ENCODE measurements at regions of chr22 and their contacts with region 1.

Region 1: DNA sequence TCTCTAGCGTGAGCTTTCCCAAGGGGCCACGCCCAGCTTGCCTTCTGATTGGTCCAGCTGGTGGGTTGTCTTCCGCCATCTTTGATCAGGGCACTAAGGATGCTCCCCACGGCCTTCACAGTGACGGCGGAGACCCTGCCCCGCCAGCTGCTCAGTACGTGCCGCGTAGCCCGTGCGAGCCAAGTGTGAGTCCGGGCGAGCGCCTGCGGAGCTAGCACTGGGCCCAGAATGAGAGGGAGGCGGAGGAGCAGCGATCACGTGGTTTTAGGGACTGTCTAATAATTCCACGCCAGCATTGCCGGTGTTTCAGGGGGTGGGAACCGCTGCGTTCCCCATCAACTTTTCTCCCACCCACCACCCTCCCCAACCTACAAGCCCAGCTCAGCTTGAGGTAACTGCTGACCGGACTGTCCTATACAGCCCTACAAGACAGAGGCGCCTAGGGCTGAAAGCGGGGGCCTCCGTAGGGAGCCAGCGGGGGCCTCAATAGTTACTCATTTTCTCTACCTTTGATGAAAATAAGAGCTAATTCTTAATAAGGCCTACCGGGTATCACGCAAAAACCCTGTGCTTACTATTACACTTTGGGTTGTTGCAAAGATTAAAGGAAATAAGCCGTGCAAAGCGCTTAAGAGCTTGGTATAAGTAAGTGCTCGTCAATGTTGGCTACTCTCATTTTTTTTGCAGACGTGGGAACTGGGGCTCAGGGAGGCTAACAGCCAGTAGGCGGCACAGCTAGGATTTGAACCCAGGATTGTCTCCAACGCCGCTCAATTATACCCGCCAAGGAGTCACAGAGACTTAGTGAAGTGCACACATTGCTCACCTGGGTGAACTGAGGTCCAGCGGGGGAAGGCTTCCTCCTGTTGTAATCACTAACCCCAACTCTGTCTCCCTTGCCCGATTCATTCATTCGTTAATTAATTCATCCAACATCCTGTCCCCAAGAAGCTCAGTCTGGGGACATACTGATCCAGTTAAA is 1.3 kb upstream of the MTFP1 start:
- DNase-seq: peak; percentile 99 to 100
- H3K4me3 ChIP-seq: peak overlapping the region; percentile 36
- CTCF ChIP-seq: no peak
- POLR2A ChIP-seq: no peak

Region 2: GRCh38 chr22:31313366-31314147 is 889.3 kb after region 1 on chr22:
- intact Hi-C with region 1: loop called (anchors 10 kb)
- DNase-seq: peak; percentile 81 to 91
- H3K4me3 ChIP-seq: no peak overlapping the region
- CTCF ChIP-seq: peak in 1 of 3 donors; percentile 74
- POLR2A ChIP-seq: no peak

Measured in lower leg skin (tissue), 4 donors.